Aorta (tissue), 5 donors: ENCODE measurements at regions of chr3 and their contacts with region 1.

Region 1: GRCh38 chr3:194315088-194315964 is 35.8 kb downstream of the CPN2 start:
- DNase-seq: peak; percentile 87 to 97
- ATAC-seq: peak; percentile 90
- H3K4me3 ChIP-seq: peak overlapping the region in 1 of 2 donors; percentile 7
- H3K27ac ChIP-seq: no peak overlapping the region
- H3K4me1 ChIP-seq: no peaks in the 10 kb centered on the region
- H3K27me3 ChIP-seq: no peaks in the 10 kb centered on the region

Region 2: GRCh38 chr3:193665370-193665989 is 649.8 kb before region 1 on chr3:
- intact Hi-C with region 1: loop called in 1 of 2 experiments (anchors 10 kb)
- DNase-seq: no peak
- ATAC-seq: no peak
- H3K4me3 ChIP-seq: no peak overlapping the region
- H3K27ac ChIP-seq: no peak overlapping the region
- H3K4me1 ChIP-seq: no peaks in the 10 kb centered on the region
- H3K27me3 ChIP-seq: no peaks in the 10 kb centered on the region

Region 3: DNA sequence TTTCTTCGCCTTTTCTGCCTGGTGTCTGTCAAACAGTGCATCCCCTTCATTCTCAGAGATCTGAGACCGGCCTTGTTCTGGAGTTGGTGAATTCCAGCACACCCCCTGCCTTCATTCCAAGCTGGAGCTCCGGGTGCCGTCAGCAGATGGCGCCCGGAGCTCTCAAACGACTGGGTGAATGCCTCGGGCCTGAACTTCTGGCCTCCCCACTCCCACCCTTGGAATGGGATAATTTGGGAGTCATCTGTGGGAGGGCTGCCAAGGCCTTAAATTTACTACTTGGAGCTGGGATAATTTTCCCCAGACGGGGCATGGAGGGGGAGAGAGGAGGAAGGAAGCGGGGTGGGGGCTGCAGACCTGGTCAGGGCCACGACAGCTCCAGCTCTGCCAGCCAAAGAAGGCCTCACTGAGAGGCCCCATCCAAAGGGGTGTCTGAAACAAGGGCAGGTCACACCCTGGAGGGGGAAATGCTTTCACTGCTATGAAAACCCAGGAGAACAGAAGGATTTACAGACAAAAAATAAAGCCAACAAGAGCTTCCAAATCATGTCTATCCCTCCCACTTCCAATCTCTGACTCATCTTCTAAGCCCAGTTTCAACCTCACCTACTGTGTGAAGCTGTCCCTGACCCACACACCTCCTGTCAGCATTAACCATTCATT is 534.4 kb before region 1 on chr3:
- intact Hi-C with region 1: loop called (anchors 1 to 2 kb)
- DNase-seq: peak; percentile 78 to 89
- ATAC-seq: peak; percentile 90
- H3K4me3 ChIP-seq: no peak overlapping the region
- H3K27ac ChIP-seq: no peak overlapping the region
- H3K4me1 ChIP-seq: no peaks in the 10 kb centered on the region
- H3K27me3 ChIP-seq: no peaks in the 10 kb centered on the region

Region 4: GRCh38 chr3:193788189-193788991 is 526.9 kb before region 1 on chr3:
- intact Hi-C with region 1: loop called (anchors 1 to 2 kb)
- DNase-seq: peak in 1 of 2 donors; percentile 59
- ATAC-seq: peak; percentile 86
- H3K4me3 ChIP-seq: no peak overlapping the region
- H3K27ac ChIP-seq: no peak overlapping the region
- H3K4me1 ChIP-seq: no peaks in the 10 kb centered on the region
- H3K27me3 ChIP-seq: peaks cover 0 to 2% of the 10 kb centered on the region in 2 donors

Region 5: GRCh38 chr3:194003125-194004057 is 311.9 kb before region 1 on chr3:
- intact Hi-C with region 1: loop called (anchors 2 to 10 kb)
- DNase-seq: peak; percentile 95 to 96
- ATAC-seq: peak; percentile 94
- H3K4me3 ChIP-seq: peak overlapping the region in 1 of 2 donors; percentile 14
- H3K27ac ChIP-seq: peak overlapping the region in 1 of 2 donors; percentile 69
- H3K4me1 ChIP-seq: peaks cover under 1 to 1% of the 10 kb centered on the region in 2 donors
- H3K27me3 ChIP-seq: no peaks in the 10 kb centered on the region

Region 6: GRCh38 chr3:194070634-194071409 is 244.5 kb before region 1 on chr3:
- intact Hi-C with region 1: loop called in 1 of 2 experiments (anchors 10 kb)
- DNase-seq: peak; percentile 91 to 96
- ATAC-seq: peak; percentile 90
- H3K4me3 ChIP-seq: peak overlapping the region in 1 of 2 donors; percentile 27
- H3K27ac ChIP-seq: peak overlapping the region in 1 of 2 donors; percentile 22
- H3K4me1 ChIP-seq: no peaks in the 10 kb centered on the region
- H3K27me3 ChIP-seq: no peaks in the 10 kb centered on the region

Region 7: GRCh38 chr3:194231929-194232842 is 83.1 kb before region 1 on chr3:
- intact Hi-C with region 1: no loop called
- DNase-seq: no peak
- ATAC-seq: no peak
- H3K4me3 ChIP-seq: no peak overlapping the region
- H3K27ac ChIP-seq: no peak overlapping the region
- H3K4me1 ChIP-seq: no peaks in the 10 kb centered on the region
- H3K27me3 ChIP-seq: no peaks in the 10 kb centered on the region

Region 8: DNA sequence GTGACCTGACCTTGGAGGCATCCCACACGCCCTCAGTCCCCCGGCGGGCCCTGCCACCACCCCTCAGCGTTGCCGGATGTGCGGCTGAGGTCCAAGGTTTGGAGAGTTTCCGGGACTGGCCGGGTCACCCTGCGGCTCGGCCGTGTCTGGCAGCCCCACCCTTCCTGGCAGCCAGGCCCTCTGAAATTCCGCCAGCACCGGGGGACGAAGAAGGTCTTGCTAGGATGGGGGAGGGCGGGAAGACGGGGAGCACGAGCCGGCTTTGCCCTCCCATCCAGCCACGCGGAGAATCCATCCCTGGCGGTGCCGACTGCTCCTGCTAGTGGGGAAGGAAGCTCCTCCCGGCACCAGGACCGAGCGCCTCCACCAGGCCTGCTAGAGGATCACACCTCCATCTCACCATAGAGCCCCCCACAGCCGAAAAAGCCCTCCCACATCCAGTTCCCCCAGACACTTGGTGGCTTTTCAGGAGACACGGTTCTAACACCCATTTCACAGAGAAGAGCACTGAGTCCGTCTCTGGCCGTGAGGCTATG is 45.6 kb before region 1 on chr3:
- intact Hi-C with region 1: loop called in 1 of 2 experiments (anchors 5 kb)
- DNase-seq: peak; percentile 92
- ATAC-seq: peak; percentile 56
- H3K4me3 ChIP-seq: no peak overlapping the region
- H3K27ac ChIP-seq: peak overlapping the region in 1 of 2 donors; percentile 38
- H3K4me1 ChIP-seq: peaks cover 0 to 3% of the 10 kb centered on the region in 2 donors
- H3K27me3 ChIP-seq: no peaks in the 10 kb centered on the region

Region 9: GRCh38 chr3:194279701-194280360 is 35.5 kb before region 1 on chr3:
- intact Hi-C with region 1: no loop called
- DNase-seq: peak in 1 of 2 donors; percentile 46
- ATAC-seq: no peak
- H3K4me3 ChIP-seq: no peak overlapping the region
- H3K27ac ChIP-seq: no peak overlapping the region
- H3K4me1 ChIP-seq: peaks cover 4 to 6% of the 10 kb centered on the region in 2 donors
- H3K27me3 ChIP-seq: no peaks in the 10 kb centered on the region

Region 10: GRCh38 chr3:194381460-194381875 is 66.1 kb after region 1 on chr3:
- intact Hi-C with region 1: no loop called
- DNase-seq: peak in 1 of 2 donors; percentile 60
- ATAC-seq: no peak
- H3K4me3 ChIP-seq: no peak overlapping the region
- H3K27ac ChIP-seq: no peak overlapping the region
- H3K4me1 ChIP-seq: no peaks in the 10 kb centered on the region
- H3K27me3 ChIP-seq: peaks cover 0 to 3% of the 10 kb centered on the region in 2 donors